Activated naive CD4-positive, alpha-beta T cell treated with anti-CD3 and anti-CD28 coated beads, Interleukin-2, amount 10 ng/mL, durations not matched to agents 7 days and 5 days (primary cell): ENCODE measurements at regions of chr3 and their contacts with region 1.

Region 1: GRCh38 chr3:192188218-192188835 is 539.0 kb downstream of the FGF12 start:
- DNase-seq: peak; percentile 60
- H3K4me3 Mint-ChIP-seq: no peak overlapping the region
- H3K27ac Mint-ChIP-seq: no peak overlapping the region
- H3K4me1 Mint-ChIP-seq: no peaks in the 10 kb centered on the region
- H3K27me3 Mint-ChIP-seq: no peaks in the 10 kb centered on the region

Region 2: DNA sequence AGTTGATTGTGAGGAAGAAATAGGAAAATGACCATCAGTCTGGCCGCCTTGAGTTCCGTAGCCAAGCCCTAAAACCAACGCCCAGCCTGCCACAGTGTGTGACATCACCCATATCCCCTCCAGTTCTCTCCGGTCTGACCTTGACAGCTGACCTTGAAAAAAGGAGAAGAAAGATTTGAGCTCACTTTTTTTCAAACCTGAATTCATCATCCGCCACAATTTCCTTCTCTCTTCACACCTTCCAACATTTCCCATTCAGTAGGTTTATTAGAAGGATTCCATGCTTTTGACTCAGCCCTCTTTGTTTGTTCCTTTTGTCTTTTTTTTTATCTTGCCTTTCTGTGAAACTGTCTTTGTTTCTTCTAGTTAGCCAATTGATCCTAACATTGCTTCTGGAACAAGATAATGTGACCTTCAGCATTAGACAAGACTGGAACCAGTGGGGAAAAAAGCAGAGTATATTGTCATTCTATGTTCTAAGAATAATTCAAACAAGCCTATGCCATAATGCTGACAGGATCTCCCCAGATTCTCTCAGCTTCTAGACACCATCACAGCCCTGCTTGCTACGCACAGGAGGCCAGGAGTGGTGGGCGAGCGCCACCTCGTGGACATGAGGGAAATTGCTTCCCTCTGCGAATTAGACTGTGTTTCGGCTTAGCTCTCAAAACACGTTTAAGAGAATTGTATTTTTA is 255.9 kb after region 1 on chr3:
- CTCF ChIA-PET with region 1: interaction called, 40 read pairs
- DNase-seq: peak; percentile 70
- H3K4me3 Mint-ChIP-seq: no peak overlapping the region
- H3K27ac Mint-ChIP-seq: no peak overlapping the region
- H3K4me1 Mint-ChIP-seq: no peaks in the 10 kb centered on the region
- H3K27me3 Mint-ChIP-seq: peaks cover 12% of the 10 kb centered on the region

Region 3: DNA sequence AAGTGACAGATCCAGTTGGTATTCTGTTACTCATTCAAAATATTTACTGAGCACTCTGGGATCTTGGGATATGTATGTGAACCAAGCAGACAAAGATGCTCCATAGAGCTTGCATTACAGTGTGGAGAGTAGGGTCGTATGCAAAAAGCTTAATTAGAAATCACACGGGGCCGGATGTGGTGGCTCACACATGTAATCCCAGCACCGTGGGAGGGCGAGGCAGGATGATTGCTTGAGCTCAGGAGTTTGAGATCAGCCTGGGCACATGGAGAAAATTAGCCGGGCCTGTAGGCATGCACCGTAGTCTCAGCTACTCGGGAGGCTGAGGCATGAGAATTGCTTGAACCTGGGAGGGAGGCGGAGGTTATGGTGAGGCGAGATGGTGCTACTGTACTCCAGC is 798.1 kb after region 1 on chr3:
- CTCF ChIA-PET with region 1: no interaction called
- DNase-seq: no peak
- H3K4me3 Mint-ChIP-seq: no peak overlapping the region
- H3K27ac Mint-ChIP-seq: no peak overlapping the region
- H3K4me1 Mint-ChIP-seq: no peaks in the 10 kb centered on the region
- H3K27me3 Mint-ChIP-seq: peaks cover 4% of the 10 kb centered on the region